ENCODE measurements at regions of chr7 and their contacts with region 1.

Region 1: GRCh38 chr7:89622838-89623672 is 531.2 kb upstream of the STEAP1 start:
- DNase-seq: no peak
- H3K4me3 Mint-ChIP-seq: no peak overlapping the region
- H3K27ac Mint-ChIP-seq: no peak overlapping the region
- H3K4me1 Mint-ChIP-seq: peaks cover 19% of the 10 kb centered on the region
- H3K27me3 Mint-ChIP-seq: no peaks in the 10 kb centered on the region

Region 2: GRCh38 chr7:88243345-88243909 is 1379.6 kb before region 1 on chr7:
- CTCF ChIA-PET with region 1: interaction called, 4 read pairs
- POLR2A ChIA-PET with region 1: no interaction called
- intact Hi-C with region 1: loop called (anchors 10 kb)
- DNase-seq: no peak
- H3K4me3 Mint-ChIP-seq: no peak overlapping the region
- H3K27ac Mint-ChIP-seq: no peak overlapping the region
- H3K4me1 Mint-ChIP-seq: no peaks in the 10 kb centered on the region
- H3K27me3 Mint-ChIP-seq: peaks cover 7% of the 10 kb centered on the region

Region 3: GRCh38 chr7:88789480-88790064 is 833.5 kb before region 1 on chr7:
- CTCF ChIA-PET with region 1: interaction called, 3 read pairs
- POLR2A ChIA-PET with region 1: no interaction called
- intact Hi-C with region 1: loop called (anchors 1 kb)
- DNase-seq: no peak
- H3K4me3 Mint-ChIP-seq: no peak overlapping the region
- H3K27ac Mint-ChIP-seq: no peak overlapping the region
- H3K4me1 Mint-ChIP-seq: no peaks in the 10 kb centered on the region
- H3K27me3 Mint-ChIP-seq: no peaks in the 10 kb centered on the region

Region 4: GRCh38 chr7:89642173-89642572 is 19.1 kb after region 1 on chr7:
- CTCF ChIA-PET with region 1: no interaction called
- POLR2A ChIA-PET with region 1: no interaction called
- intact Hi-C with region 1: no loop called
- DNase-seq: no peak
- H3K4me3 Mint-ChIP-seq: no peak overlapping the region
- H3K27ac Mint-ChIP-seq: no peak overlapping the region
- H3K4me1 Mint-ChIP-seq: no peaks in the 10 kb centered on the region
- H3K27me3 Mint-ChIP-seq: no peaks in the 10 kb centered on the region

Region 5: DNA sequence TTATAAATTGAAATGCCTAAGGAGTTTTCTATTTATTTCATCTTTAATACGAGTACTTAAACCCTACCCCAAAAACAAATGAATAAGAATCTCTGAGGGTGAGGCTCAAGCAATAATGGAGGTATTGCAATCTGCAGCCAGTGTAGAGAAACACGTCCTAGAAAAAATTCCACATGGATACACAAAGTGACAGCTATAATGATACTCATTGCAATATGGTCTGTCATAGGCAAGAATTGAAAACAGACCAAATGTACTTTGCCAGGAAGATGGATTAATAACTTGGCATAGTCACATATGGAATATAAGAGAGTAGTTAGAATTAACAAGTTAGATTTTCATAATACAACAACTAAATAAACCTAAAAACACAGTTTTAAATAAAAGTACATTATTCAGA is 91.1 kb after region 1 on chr7:
- CTCF ChIA-PET with region 1: no interaction called
- POLR2A ChIA-PET with region 1: no interaction called
- intact Hi-C with region 1: no loop called
- DNase-seq: no peak
- H3K4me3 Mint-ChIP-seq: no peak overlapping the region
- H3K27ac Mint-ChIP-seq: no peak overlapping the region
- H3K4me1 Mint-ChIP-seq: no peaks in the 10 kb centered on the region
- H3K27me3 Mint-ChIP-seq: no peaks in the 10 kb centered on the region

Measured in activated CD4-positive, alpha-beta memory T cell treated with anti-CD3 and anti-CD28 coated beads for 36 hours (primary cell).